Thyroid gland (tissue), 4 donors: ENCODE measurements at regions of chr14 and their contacts with region 1.

Region 1: DNA sequence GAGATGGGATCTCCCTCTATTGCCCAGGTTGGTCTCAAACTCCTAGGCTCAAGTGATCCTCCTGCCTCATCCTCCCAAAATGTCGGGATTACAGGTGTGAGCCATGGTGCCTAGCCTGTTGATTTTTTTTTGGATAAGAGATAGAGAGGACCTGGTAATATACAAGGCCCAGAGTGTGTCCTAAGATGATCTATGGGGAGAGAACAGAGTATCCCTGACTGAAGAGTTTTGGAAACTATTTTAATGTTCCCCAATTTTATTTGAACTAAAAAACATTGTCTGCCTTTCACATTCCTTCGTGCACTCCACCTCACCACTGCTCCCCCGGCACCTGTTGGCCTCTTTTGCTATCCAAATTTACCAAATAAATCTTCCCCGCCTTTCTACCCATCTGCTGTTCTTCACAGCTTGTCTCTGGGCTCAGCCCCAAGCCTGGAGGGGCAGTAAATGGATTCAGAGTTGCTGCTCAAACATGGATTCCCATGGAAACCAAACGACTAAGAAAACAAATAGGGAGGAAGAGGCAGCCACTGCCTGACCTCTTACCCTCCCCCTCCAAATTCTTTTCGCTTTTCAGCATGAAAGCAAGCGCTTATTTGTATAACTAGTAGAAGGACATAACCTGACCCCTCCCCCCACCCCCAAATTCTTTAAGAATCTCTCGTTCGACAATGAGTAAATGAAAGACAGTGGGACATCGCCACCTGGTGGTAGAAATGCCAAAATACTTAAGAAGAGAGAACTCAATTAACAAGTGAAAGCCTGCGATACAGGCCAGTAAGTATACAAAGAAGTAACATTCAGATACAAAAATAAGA is 22.6 kb downstream of the OR10G3 start:
- DNase-seq: peak; percentile 85 to 87
- H3K4me3 ChIP-seq: no peak overlapping the region
- H3K27ac ChIP-seq: peak overlapping the region; percentile 66 to 74 (median 68)
- H3K4me1 ChIP-seq: peaks cover 5 to 18% of the 10 kb centered on the region in 2 donors
- H3K27me3 ChIP-seq: no peaks in the 10 kb centered on the region
- CTCF ChIP-seq: peak; percentile 38 to 92 (median 63)
- POLR2A ChIP-seq: no peak

Region 2: DNA sequence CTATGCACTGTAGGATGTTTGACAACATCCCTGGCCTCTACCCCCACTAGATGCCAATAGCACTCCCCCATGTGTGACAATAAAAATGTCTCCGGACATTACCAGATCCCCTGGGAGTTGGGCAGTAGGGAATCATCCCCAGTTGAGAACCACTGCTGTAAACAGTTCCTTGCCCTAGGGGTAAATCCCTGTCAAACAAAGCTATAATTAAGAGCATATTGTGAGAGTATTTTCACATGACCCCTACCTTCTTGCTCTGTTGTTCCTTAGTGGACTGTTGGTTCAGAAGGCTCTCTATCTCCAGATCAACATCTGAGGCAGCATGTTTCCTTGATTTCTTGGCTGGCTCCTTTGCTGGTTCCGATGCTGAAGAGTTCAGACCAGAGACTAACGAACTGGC is 54.4 kb before region 1 on chr14:
- intact Hi-C with region 1: loop called (anchors 5 kb)
- DNase-seq: no peak
- H3K4me3 ChIP-seq: no peak overlapping the region
- H3K27ac ChIP-seq: peak overlapping the region in 2 of 3 donors; percentile 78 to 83
- H3K4me1 ChIP-seq: peaks cover 9 to 20% of the 10 kb centered on the region in 2 donors
- H3K27me3 ChIP-seq: no peaks in the 10 kb centered on the region
- CTCF ChIP-seq: no peak
- POLR2A ChIP-seq: no peak